ENCODE measurements at regions of chr10 and their contacts with region 1.

Region 1: GRCh38 chr10:100373298-100374136 is 26.5 kb downstream of the SCD start:
- DNase-seq: peak; percentile 94 to 96
- ATAC-seq: peak; percentile 96 to 99 (median 98)
- H3K4me3 ChIP-seq: peak overlapping the region; percentile 39 to 82 (median 65)
- H3K27ac ChIP-seq: peak overlapping the region; percentile 83 to 97 (median 92)
- H3K4me1 ChIP-seq: peaks cover 11 to 53% (median 40%) of the 10 kb centered on the region in 9 donors
- H3K27me3 ChIP-seq: no peaks in the 10 kb centered on the region
- CTCF ChIP-seq: no peak

Region 2: GRCh38 chr10:99698504-99699080 is 674.9 kb before region 1 on chr10:
- intact Hi-C with region 1: no loop called
- DNase-seq: no peak
- ATAC-seq: no peak
- H3K4me3 ChIP-seq: no peak overlapping the region
- H3K27ac ChIP-seq: no peak overlapping the region
- H3K4me1 ChIP-seq: no peaks in the 10 kb centered on the region
- H3K27me3 ChIP-seq: no peaks in the 10 kb centered on the region
- CTCF ChIP-seq: peak in 1 of 9 donors; percentile 14

Region 3: DNA sequence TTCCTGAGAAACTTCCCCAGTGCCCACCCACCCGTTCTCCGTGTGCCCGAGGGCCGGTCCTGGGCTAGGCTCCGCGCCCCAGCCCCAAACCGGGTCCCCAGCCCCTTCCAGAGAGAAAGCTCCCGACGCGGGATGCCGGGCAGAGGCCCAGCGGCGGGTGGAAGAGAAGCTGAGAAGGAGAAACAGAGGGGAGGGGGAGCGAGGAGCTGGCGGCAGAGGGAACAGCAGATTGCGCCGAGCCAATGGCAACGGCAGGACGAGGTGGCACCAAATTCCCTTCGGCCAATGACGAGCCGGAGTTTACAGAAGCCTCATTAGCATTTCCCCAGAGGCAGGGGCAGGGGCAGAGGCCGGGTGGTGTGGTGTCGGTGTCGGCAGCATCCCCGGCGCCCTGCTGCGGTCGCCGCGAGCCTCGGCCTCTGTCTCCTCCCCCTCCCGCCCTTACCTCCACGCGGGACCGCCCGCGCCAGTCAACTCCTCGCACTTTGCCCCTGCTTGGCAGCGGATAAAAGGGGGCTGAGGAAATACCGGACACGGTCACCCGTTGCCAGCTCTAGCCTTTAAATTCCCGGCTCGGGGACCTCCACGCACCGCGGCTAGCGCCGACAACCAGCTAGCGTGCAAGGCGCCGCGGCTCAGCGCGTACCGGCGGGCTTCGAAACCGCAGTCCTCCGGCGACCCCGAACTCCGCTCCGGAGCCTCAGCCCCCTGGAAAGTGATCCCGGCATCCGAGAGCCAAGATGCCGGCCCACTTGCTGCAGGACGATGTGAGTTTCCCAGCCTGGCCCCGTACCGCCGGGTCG is 26.6 kb before region 1 on chr10 and contains the start of gene SCD:
- intact Hi-C with region 1: loop called in 1 of 10 experiments (anchors 2 kb)
- DNase-seq: peak; percentile 69 to 75
- ATAC-seq: peak; percentile 78 to 87 (median 85)
- H3K4me3 ChIP-seq: peak within 1 kb of the TSS; percentile 19 to 74 (median 64)
- H3K27ac ChIP-seq: peak within 1 kb of the TSS in 3 of 10 donors; percentile 41 to 78 (median 43)
- H3K4me1 ChIP-seq: peaks cover 0 to 27% (median 19%) of the 10 kb centered on the region in 9 donors
- H3K27me3 ChIP-seq: peaks cover 0 to 40% (median 8%) of the 10 kb centered on the region in 7 donors
- CTCF ChIP-seq: no peak
- total RNA-seq, gene SCD: 1.8 to 24.7 (median 12.6) TPM